ENCODE measurements at regions of chr9 and their contacts with region 1.

Region 1: GRCh38 chr9:84697509-84698114 is 28.1 kb downstream of the NTRK2 start:
- DNase-seq: peak in 1 of 2 donors; percentile 71
- H3K4me3 ChIP-seq: no peak overlapping the region
- H3K27ac ChIP-seq: no peak overlapping the region
- H3K4me1 ChIP-seq: no peaks in the 10 kb centered on the region
- H3K27me3 ChIP-seq: no peaks in the 10 kb centered on the region
- CTCF ChIP-seq: peak; percentile 51 to 65 (median 61)

Region 2: DNA sequence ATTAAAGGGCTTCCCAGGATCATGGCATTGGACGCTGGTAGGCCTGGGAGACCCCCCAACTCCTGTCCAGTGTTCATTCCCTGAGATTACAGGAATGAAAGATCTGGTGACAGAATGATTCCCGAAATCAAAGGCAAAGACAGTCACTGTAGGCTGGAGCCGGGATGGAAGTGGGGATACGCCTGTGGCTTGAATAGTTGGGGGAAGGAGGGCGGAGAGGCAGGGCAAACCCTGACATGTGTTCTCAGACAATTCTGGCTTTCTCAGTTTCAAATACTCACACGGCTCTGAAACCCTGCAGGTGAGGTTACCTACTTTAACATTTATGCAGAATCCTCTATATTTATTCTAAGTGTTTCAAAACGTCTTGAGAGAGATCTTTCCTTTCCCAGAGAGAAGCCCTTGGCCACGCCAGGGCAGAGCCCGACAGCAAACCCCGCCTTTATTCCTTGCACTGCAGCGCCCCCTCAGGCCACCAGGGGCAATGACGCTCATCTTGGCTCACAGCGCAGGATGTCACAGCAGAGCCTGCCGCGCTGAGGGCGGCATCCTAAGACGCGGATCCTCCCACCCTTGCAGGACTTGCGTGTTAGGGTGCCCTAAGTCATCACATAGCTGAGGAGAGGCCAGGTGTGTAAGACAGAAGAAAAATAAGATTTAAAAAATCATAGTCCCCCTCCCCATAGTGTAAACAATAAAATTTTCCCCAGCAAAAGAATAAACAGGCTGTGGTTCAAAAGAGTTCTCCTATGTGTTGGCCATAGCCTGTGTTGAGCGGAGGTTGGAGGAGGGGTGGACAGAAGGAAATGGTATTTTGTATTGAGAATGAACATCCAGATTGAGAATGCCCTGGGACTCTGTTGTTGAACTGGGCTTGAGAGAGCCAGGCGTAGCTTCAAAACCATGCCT is 256.4 kb after region 1 on chr9:
- intact Hi-C with region 1: loop called (anchors 1 kb)
- DNase-seq: peak in 1 of 2 donors; percentile 83
- H3K4me3 ChIP-seq: no peak overlapping the region
- H3K27ac ChIP-seq: no peak overlapping the region
- H3K4me1 ChIP-seq: no peaks in the 10 kb centered on the region
- H3K27me3 ChIP-seq: no peaks in the 10 kb centered on the region
- CTCF ChIP-seq: peak; percentile 62 to 95 (median 91)

Region 3: GRCh38 chr9:85258823-85259370 is 561.3 kb after region 1 on chr9:
- intact Hi-C with region 1: loop called (anchors 1 kb)
- DNase-seq: no peak
- H3K4me3 ChIP-seq: no peak overlapping the region
- H3K27ac ChIP-seq: no peak overlapping the region
- H3K4me1 ChIP-seq: no peaks in the 10 kb centered on the region
- H3K27me3 ChIP-seq: no peaks in the 10 kb centered on the region
- CTCF ChIP-seq: peak in 2 of 3 experiments; percentile 54 to 66

Measured in ascending aorta (tissue), 2 donors.